Posterior vena cava (tissue), 2 donors: ENCODE measurements at regions of chr3 and their contacts with region 1.

Region 1: GRCh38 chr3:47989981-47990440 is 26.2 kb downstream of the MAP4 start:
- DNase-seq: peak; percentile 87

Region 2: GRCh38 chr3:47849699-47850563 is 140.1 kb before region 1 on chr3:
- intact Hi-C with region 1: loop called in 1 of 2 experiments (anchors 10 kb)
- DNase-seq: no peak

Region 3: DNA sequence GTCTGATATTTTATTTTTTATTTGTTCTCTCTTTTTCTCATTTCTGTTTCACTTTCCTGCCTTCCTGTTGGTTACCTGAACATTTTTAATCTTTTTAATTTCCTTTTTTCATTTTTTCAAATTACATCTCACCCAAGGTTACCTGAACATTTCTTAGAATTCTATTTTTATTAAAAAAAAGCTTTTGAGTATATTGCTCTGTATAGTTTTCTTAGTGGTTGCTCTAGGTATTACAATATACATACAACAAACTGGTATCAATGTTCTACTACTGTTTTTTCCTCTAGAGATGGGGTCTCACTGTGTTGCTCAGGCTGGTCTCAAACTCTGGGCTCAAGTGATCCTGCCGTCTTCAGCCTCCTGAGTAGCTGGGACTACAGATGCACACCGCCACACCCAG is 107.7 kb before region 1 on chr3:
- intact Hi-C with region 1: no loop called
- DNase-seq: no peak

Region 4: DNA sequence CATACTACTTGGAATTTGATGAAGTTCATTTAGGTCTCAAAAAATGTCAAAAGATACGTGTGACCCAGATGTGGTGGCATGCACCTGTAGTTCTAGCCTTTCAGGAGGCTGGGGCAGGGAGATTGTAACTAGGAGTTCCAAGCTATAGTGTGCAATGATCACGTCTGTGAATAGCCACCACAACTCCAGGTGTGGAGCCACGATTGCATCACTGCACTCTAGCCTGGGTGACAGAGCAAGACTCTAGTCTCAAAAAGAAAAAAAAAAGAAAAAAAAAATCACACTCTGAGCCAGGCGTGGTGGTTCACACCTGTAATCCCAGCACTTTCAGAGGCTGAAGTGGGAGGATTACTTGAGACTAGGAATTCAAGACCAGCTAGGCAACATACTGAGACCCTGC is 12.0 kb after region 1 on chr3:
- intact Hi-C with region 1: no loop called
- DNase-seq: no peak